ENCODE measurements at regions of chr11 and their contacts with region 1.

Region 1: DNA sequence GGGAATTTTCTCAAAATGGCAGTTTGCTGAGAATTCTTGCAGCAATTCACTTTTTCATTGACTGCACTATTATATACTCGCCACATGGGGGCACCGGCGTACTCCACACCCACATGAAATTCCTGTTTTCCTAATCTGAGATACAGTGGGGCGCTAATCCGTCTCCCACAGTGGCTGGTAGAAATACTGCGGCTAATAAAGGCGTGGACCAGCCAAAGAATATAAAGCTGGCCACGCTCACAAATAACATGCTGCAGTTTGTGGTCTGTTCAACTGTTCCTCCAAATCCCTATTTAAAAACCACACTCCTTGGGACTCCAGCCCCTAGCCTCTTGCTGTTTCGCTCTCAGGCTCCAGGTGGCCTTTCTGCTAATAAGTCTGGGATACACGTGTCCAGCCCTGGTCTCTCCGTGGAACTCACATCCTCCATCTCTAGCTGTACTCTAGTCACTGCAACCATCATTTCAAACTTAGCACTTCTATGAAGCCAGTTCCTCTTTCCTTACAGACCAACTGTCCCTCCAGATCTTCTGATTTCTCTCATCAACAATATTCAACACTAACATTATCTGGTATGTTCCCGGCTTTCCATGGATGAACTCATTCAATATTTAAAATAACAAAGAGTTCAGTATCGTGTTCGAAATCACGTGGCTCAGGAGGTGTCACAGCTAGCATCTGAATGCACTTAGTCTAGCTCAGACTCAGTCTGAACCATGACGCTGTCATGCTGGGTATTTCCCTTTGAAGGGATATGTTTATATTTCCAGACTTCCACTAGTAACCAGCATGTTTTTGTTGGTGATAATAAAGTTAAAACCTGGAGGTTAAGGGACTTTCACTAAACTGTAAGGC is 22.0 kb downstream of the TBRG1 start:
- DNase-seq: peak; percentile 88
- ATAC-seq: peak; percentile 83
- H3K4me3 ChIP-seq: peak overlapping the region; percentile 0; the same call in 1 of the 2 replicates
- H3K27ac ChIP-seq: no peak overlapping the region
- H3K4me1 ChIP-seq: peaks cover 6% of the 10 kb centered on the region
- H3K27me3 ChIP-seq: no peaks in the 10 kb centered on the region
- CTCF ChIP-seq: peak; percentile 92
- POLR2A ChIP-seq: no peak; the same call in 1 of the 2 replicates
- RAD21 ChIP-seq: peak; percentile 82

Region 2: GRCh38 chr11:124633355-124633754 is 11.3 kb before region 1 on chr11:
- CTCF ChIA-PET with region 1: interaction called, 10 read pairs
- POLR2A ChIA-PET with region 1: no interaction called
- dilution Hi-C with region 1: no loop called
- in situ Hi-C with region 1: no loop called
- intact Hi-C with region 1: no loop called
- DNase-seq: peak; percentile 17
- ATAC-seq: peak; percentile 85
- H3K4me3 ChIP-seq: no peak overlapping the region
- H3K27ac ChIP-seq: no peak overlapping the region
- H3K4me1 ChIP-seq: no peaks in the 10 kb centered on the region
- H3K27me3 ChIP-seq: no peaks in the 10 kb centered on the region
- CTCF ChIP-seq: peak; percentile 32
- POLR2A ChIP-seq: no peak
- RAD21 ChIP-seq: peak; percentile 18; the same call in 1 of the 2 replicates

Region 3: GRCh38 chr11:124758317-124759203 is 113.9 kb after region 1 on chr11:
- CTCF ChIA-PET with region 1: interaction called, 8 read pairs
- POLR2A ChIA-PET with region 1: no interaction called
- dilution Hi-C with region 1: no loop called
- in situ Hi-C with region 1: no loop called
- intact Hi-C with region 1: loop called (anchors 1 kb)
- DNase-seq: peak; percentile 44
- ATAC-seq: peak; percentile 81
- H3K4me3 ChIP-seq: peak overlapping the region; percentile 33
- H3K27ac ChIP-seq: no peak overlapping the region
- H3K4me1 ChIP-seq: peaks cover 5% of the 10 kb centered on the region
- H3K27me3 ChIP-seq: peaks cover 17% of the 10 kb centered on the region; the same call in 1 of the 2 replicates
- CTCF ChIP-seq: peak; percentile 52
- POLR2A ChIP-seq: no peak
- RAD21 ChIP-seq: peak; percentile 39

Region 4: GRCh38 chr11:124837491-124837856 is 192.8 kb after region 1 on chr11:
- CTCF ChIA-PET with region 1: interaction called, 5 read pairs
- POLR2A ChIA-PET with region 1: no interaction called
- dilution Hi-C with region 1: no loop called
- in situ Hi-C with region 1: loop called (anchors 10 kb)
- intact Hi-C with region 1: loop called (anchors 1 kb)
- DNase-seq: peak; percentile 90
- ATAC-seq: peak; percentile 82
- H3K4me3 ChIP-seq: no peak overlapping the region
- H3K27ac ChIP-seq: no peak overlapping the region
- H3K4me1 ChIP-seq: no peaks in the 10 kb centered on the region; the same call in 1 of the 2 replicates
- H3K27me3 ChIP-seq: peaks cover 49% of the 10 kb centered on the region
- CTCF ChIP-seq: peak; percentile 80
- POLR2A ChIP-seq: no peak
- RAD21 ChIP-seq: peak; percentile 69

Region 5: GRCh38 chr11:124865921-124866583 is 221.4 kb after region 1 on chr11:
- CTCF ChIA-PET with region 1: interaction called, 3 read pairs
- POLR2A ChIA-PET with region 1: no interaction called
- dilution Hi-C with region 1: no loop called
- in situ Hi-C with region 1: no loop called
- intact Hi-C with region 1: loop called (anchors 1 kb)
- DNase-seq: peak; percentile 15
- ATAC-seq: peak; percentile 56
- H3K4me3 ChIP-seq: peak overlapping the region; percentile 20; the same call in 1 of the 2 replicates
- H3K27ac ChIP-seq: no peak overlapping the region
- H3K4me1 ChIP-seq: peaks cover 2% of the 10 kb centered on the region
- H3K27me3 ChIP-seq: peaks cover 97% of the 10 kb centered on the region
- CTCF ChIP-seq: peak; percentile 69
- POLR2A ChIP-seq: no peak
- RAD21 ChIP-seq: peak; percentile 42; the same call in 1 of the 2 replicates

Region 6: GRCh38 chr11:124953753-124954589 is 309.3 kb after region 1 on chr11 and contains the start of gene CCDC15:
- CTCF ChIA-PET with region 1: no interaction called
- POLR2A ChIA-PET with region 1: no interaction called
- dilution Hi-C with region 1: no loop called
- in situ Hi-C with region 1: no loop called
- intact Hi-C with region 1: loop called (anchors 5 kb)
- DNase-seq: peak; percentile 97
- ATAC-seq: peak; percentile 99
- H3K4me3 ChIP-seq: peak within 1 kb of the TSS; percentile 60
- H3K27ac ChIP-seq: peak within 1 kb of the TSS; percentile 75
- H3K4me1 ChIP-seq: peaks cover 2% of the 10 kb centered on the region; the same call in 1 of the 2 replicates
- H3K27me3 ChIP-seq: no peaks in the 10 kb centered on the region
- CTCF ChIP-seq: 0 out of 2 replicates have a peak, but pooled peaks have one; percentile 3
- POLR2A ChIP-seq: peak; percentile 90
- RAD21 ChIP-seq: peak; percentile 5; the same call in 1 of the 2 replicates
- total RNA-seq, gene CCDC15: 2.0 and 2.5 TPM in 2 replicates

Region 7: GRCh38 chr11:125592305-125593112 is 947.9 kb after region 1 on chr11 and contains the start of gene STT3A:
- CTCF ChIA-PET with region 1: no interaction called
- POLR2A ChIA-PET with region 1: no interaction called
- dilution Hi-C with region 1: no loop called
- in situ Hi-C with region 1: loop called (anchors 25 kb)
- intact Hi-C with region 1: no loop called
- DNase-seq: peak; percentile 100
- ATAC-seq: peak; percentile 95
- H3K4me3 ChIP-seq: peak within 1 kb of the TSS; percentile 76
- H3K27ac ChIP-seq: peak within 1 kb of the TSS; percentile 93
- H3K4me1 ChIP-seq: 0 out of 2 replicates have a peak, but pooled peaks cover 2% of the 10 kb centered on the region
- H3K27me3 ChIP-seq: no peaks in the 10 kb centered on the region
- CTCF ChIP-seq: no peak
- POLR2A ChIP-seq: peak; percentile 89
- RAD21 ChIP-seq: no peak
- total RNA-seq, gene STT3A: 346 and 387 TPM in 2 replicates

Measured in IMR-90 (cell line).